ENCODE measurements at regions of chr18 and their contacts with region 1.

Region 1: GRCh38 chr18:5309888-5310470 is 14.5 kb upstream of the ZBTB14 start:
- DNase-seq: peak; percentile 70
- ATAC-seq: peak; percentile 98
- H3K4me3 ChIP-seq: peak overlapping the region; percentile 24 to 59 (median 48)
- H3K4me3 Mint-ChIP-seq: peak overlapping the region; percentile 84
- H3K27ac ChIP-seq: peak overlapping the region; percentile 71 to 74
- H3K27ac Mint-ChIP-seq: peak overlapping the region; percentile 90
- H3K4me1 ChIP-seq: peaks cover 7 to 11% of the 10 kb centered on the region in 2 donors
- H3K4me1 Mint-ChIP-seq: peaks cover 25% of the 10 kb centered on the region
- H3K27me3 ChIP-seq: no peaks in the 10 kb centered on the region
- H3K27me3 Mint-ChIP-seq: no peaks in the 10 kb centered on the region
- CTCF ChIP-seq: no peak

Region 2: GRCh38 chr18:5237723-5238370 is 72.1 kb before region 1 on chr18:
- CTCF ChIA-PET with region 1: interaction called, 3 read pairs
- POLR2A ChIA-PET with region 1: no interaction called
- intact Hi-C with region 1: loop called (anchors 5 kb)
- DNase-seq: peak; percentile 93
- ATAC-seq: peak; percentile 89
- H3K4me3 ChIP-seq: peak overlapping the region; percentile 81 to 90 (median 87)
- H3K4me3 Mint-ChIP-seq: peak overlapping the region; percentile 99
- H3K27ac ChIP-seq: peak overlapping the region; percentile 89 to 94
- H3K27ac Mint-ChIP-seq: peak overlapping the region; percentile 99
- H3K4me1 ChIP-seq: peaks cover 12 to 18% of the 10 kb centered on the region in 2 donors
- H3K4me1 Mint-ChIP-seq: peaks cover 33% of the 10 kb centered on the region
- H3K27me3 ChIP-seq: peaks cover 0 to 3% (median under 1%) of the 10 kb centered on the region in 4 experiments
- H3K27me3 Mint-ChIP-seq: peaks cover 8% of the 10 kb centered on the region
- CTCF ChIP-seq: no peak